Dendritic cell treated with granulocyte-macrophage colony-stimulating factor and Interleukin-4, amounts not matched to agents 40 ng/mL and 50 ng/mL, for 4 days (primary cell): ENCODE measurements at regions of chr5 and their contacts with region 1.

Region 1: GRCh38 chr5:127313847-127314473 is 23.4 kb downstream of the MEGF10 start:
- H3K4me3 Mint-ChIP-seq: no peak overlapping the region
- H3K27ac Mint-ChIP-seq: no peak overlapping the region
- H3K4me1 Mint-ChIP-seq: no peaks in the 10 kb centered on the region
- H3K27me3 Mint-ChIP-seq: peaks cover 2% of the 10 kb centered on the region

Region 2: DNA sequence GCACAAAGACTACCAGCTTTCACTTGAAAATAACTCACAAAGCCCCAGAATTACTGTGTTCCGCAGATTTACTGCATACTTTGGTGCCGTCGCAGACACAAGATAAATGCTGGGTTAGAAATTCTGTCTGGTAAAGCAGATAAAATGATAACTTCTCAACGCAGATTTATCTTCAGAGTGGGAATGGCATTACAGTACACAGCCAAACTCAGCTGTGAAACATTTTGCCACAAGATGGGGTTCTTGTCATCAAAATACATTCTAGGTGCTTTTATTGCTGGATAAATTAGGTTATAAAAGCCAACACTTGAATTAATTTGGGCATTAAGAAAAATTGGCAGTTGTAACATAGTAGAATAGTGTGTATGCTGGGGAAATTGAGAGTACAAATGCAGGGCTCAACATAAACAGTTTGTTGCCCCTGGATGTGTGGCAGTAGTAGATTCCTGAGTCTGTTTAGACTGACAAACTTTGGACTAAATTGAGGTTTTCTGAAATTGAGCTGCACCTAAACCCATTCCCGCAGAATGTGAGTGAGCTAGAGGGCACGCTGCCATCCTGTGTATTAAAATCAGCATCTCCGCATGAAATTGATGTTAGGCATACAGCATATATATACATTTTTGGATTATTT is 475.9 kb before region 1 on chr5:
- intact Hi-C with region 1: loop called (anchors 2 kb)
- H3K4me3 Mint-ChIP-seq: no peak overlapping the region
- H3K27ac Mint-ChIP-seq: no peak overlapping the region
- H3K4me1 Mint-ChIP-seq: peaks cover 6% of the 10 kb centered on the region
- H3K27me3 Mint-ChIP-seq: no peaks in the 10 kb centered on the region